A549 (cell line): ENCODE measurements at regions of chr7 and their contacts with region 1.

Region 1: DNA sequence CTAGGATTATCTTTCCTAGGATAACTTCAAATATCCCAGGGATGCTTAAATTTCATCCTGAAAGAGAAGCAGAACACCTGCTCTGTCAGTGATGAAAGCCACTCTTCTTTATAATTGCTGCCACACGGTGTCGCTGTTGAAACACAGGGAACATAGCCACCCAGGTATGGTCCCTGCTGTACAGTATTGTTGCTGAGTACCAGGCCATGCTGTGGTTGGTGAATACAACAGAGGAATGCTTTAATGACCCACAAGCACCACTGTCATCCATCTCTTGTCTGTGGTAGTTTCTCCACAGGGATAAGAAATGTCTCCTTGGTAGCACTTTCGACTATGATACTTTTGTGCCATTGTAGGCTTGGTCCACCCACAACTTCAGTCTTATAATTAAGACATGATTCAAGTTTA is 70.6 kb upstream of the STARD3NL start:
- DNase-seq: peak; percentile 58 to 61
- ATAC-seq: peak; percentile 95 to 97
- H3K4me3 ChIP-seq: no peak overlapping the region
- H3K27ac ChIP-seq: no peak overlapping the region
- H3K4me1 ChIP-seq: no peaks in the 10 kb centered on the region
- CTCF ChIP-seq: peak; percentile 91
- EP300 ChIP-seq: no peak
- POLR2A ChIP-seq: no peak
- RAD21 ChIP-seq: peak; percentile 84 to 86

Region 2: GRCh38 chr7:38222481-38223096 is 115.1 kb after region 1 on chr7:
- CTCF ChIA-PET with region 1: interaction called, 60 read pairs
- POLR2A ChIA-PET with region 1: no interaction called
- DNase-seq: peak; percentile 48 to 67
- ATAC-seq: peak; percentile 81 to 84; a peak in 5 of 6 replicates
- H3K4me3 ChIP-seq: no peak overlapping the region
- H3K27ac ChIP-seq: no peak overlapping the region
- H3K4me1 ChIP-seq: peaks cover 4% of the 10 kb centered on the region; the same call in 2 of the 3 replicates
- CTCF ChIP-seq: peak; percentile 95
- EP300 ChIP-seq: no peak
- POLR2A ChIP-seq: no peak
- RAD21 ChIP-seq: peak; percentile 89 to 90

Region 3: DNA sequence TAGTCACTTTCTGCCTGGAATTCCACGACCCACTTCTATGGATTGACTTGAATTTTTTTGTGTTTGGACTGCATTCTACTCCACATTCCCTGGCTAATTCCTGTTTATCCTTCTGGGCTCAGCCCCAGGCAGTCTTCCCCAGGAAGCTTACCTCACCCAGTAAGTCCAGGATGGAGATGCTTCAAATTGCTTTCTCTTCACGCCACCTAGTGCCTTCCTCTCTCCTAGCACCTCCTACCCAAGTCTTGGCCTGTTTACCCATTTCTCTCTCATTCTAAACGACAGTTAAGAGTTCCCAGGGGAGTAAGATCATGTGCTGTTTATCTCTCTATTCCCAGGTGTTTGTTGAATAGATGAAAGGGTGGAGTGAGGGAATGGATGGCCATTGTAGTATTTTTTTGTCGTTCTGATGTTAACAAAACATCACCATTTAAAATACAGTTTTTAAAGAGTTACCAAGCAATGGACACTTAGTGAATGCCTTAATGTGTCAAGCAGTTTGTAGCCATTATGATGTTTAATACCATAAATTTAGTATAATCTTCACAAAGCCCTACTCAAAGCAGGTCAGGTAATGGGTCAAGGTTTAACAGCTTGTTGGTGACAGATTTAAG is 211.4 kb after region 1 on chr7:
- CTCF ChIA-PET with region 1: interaction called, 33 read pairs
- POLR2A ChIA-PET with region 1: no interaction called
- DNase-seq: peak; percentile 61 to 79
- ATAC-seq: peak; percentile 95 to 98
- H3K4me3 ChIP-seq: no peak overlapping the region
- H3K27ac ChIP-seq: no peak overlapping the region
- H3K4me1 ChIP-seq: peaks cover 13% of the 10 kb centered on the region; the same call in 2 of the 3 replicates
- CTCF ChIP-seq: peak; percentile 74
- EP300 ChIP-seq: no peak
- POLR2A ChIP-seq: no peak
- RAD21 ChIP-seq: peak; percentile 80 to 86

Region 4: GRCh38 chr7:38369816-38370493 is 262.5 kb after region 1 on chr7:
- CTCF ChIA-PET with region 1: interaction called, 15 read pairs
- POLR2A ChIA-PET with region 1: no interaction called
- DNase-seq: peak; percentile 81 to 90
- ATAC-seq: peak; percentile 96 to 98
- H3K4me3 ChIP-seq: no peak overlapping the region
- H3K27ac ChIP-seq: no peak overlapping the region
- H3K4me1 ChIP-seq: no peaks in the 10 kb centered on the region
- CTCF ChIP-seq: peak; percentile 76
- EP300 ChIP-seq: no peak
- POLR2A ChIP-seq: no peak
- RAD21 ChIP-seq: peak; percentile 8 to 27; a peak in 2 of 5 replicates